Activated CD4-positive, alpha-beta T cell treated with anti-CD3 and anti-CD28 coated beads for 36 hours (primary cell): ENCODE measurements at regions of chrX and their contacts with region 1.

Region 1: GRCh38 chrX:112678831-112679230 is 907 bp downstream of the LHFPL1 start:
- DNase-seq: no peak
- ATAC-seq: peak; percentile 81
- H3K4me3 Mint-ChIP-seq: peak overlapping the region; percentile 67
- H3K27ac Mint-ChIP-seq: peak overlapping the region; percentile 74
- H3K4me1 Mint-ChIP-seq: peaks cover 37% of the 10 kb centered on the region
- H3K27me3 Mint-ChIP-seq: no peaks in the 10 kb centered on the region

Region 2: DNA sequence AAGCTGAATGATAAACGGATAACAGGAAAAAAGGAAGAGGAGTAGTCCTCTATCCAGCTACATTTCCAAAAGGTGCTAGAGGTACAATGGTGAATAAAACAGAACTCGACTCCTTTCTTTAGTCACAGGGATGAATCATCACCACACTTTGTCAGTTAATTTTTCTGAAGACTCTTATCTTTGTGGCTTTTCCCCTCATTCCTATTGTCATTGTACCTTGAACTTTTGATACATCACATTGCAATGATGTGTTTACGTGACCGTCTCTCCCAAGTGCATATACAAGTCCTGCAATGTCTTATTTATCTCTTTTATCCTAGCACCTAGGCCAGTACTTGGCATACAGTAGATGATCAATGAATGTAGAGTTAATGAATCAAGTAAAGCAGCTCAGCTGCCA is 133.8 kb before region 1 on chrX:
- CTCF ChIA-PET with region 1: no interaction called
- POLR2A ChIA-PET with region 1: no interaction called
- intact Hi-C with region 1: no loop called
- DNase-seq: no peak
- ATAC-seq: no peak
- H3K4me3 Mint-ChIP-seq: no peak overlapping the region
- H3K27ac Mint-ChIP-seq: no peak overlapping the region
- H3K4me1 Mint-ChIP-seq: no peaks in the 10 kb centered on the region
- H3K27me3 Mint-ChIP-seq: no peaks in the 10 kb centered on the region

Region 3: GRCh38 chrX:112642349-112642748 is 36.5 kb before region 1 on chrX:
- CTCF ChIA-PET with region 1: interaction called, 3 read pairs
- POLR2A ChIA-PET with region 1: no interaction called
- intact Hi-C with region 1: loop called (anchors 1 kb)
- DNase-seq: peak; percentile 17
- ATAC-seq: peak; percentile 21
- H3K4me3 Mint-ChIP-seq: no peak overlapping the region
- H3K27ac Mint-ChIP-seq: no peak overlapping the region
- H3K4me1 Mint-ChIP-seq: peaks cover 27% of the 10 kb centered on the region
- H3K27me3 Mint-ChIP-seq: no peaks in the 10 kb centered on the region